Calu3 (cell line): ENCODE measurements at regions of chr5 and their contacts with region 1.

Region 1: DNA sequence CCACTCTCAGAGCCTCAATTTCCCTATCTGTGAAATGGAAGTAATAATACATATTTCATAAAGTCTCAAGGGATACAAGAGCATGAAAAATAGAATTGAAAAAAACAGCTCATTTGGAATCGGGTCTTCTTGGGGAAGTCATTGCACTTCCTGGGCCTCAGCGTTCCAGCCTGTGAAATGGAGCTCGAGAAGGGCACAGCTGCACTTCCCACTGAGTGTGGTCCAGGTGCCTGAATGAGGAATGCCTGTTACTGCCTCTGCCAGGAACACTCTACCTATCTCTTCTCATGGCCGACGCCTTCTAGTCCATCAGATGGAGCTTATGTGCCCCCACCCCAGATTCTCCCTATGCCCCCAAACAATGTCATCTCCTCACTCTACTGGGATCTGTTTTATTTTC is 924 bp upstream of the NEURL1B start:
- DNase-seq: no peak
- H3K4me3 Mint-ChIP-seq: peak overlapping the region; percentile 56
- H3K27ac Mint-ChIP-seq: no peak overlapping the region
- H3K4me1 Mint-ChIP-seq: peaks cover 8% of the 10 kb centered on the region
- H3K27me3 Mint-ChIP-seq: peaks cover 75% of the 10 kb centered on the region
- CTCF ChIP-seq: no peak

Region 2: DNA sequence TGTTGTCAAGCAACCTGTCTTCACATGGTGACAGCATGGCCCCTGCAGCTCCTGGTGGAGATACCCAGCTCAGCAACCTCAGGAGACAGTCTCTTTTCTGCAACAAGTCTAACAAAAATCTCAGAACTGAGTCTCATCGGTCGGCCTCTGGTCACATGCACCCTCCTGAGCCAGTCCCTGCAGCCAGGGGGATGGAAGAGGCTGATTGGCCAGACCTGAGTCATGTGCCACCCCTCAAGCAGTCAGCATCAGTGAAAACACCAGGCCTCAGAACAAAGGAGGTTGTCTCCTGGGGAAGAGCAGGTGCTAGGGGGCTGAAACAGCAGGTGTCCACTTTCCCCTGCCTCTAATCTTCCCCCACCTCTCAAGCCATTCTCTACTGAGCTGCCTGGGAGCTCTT is 800.1 kb before region 1 on chr5:
- CTCF ChIA-PET with region 1: no interaction called
- intact Hi-C with region 1: no loop called
- DNase-seq: no peak
- H3K4me3 Mint-ChIP-seq: no peak overlapping the region
- H3K27ac Mint-ChIP-seq: no peak overlapping the region
- H3K4me1 Mint-ChIP-seq: no peaks in the 10 kb centered on the region
- H3K27me3 Mint-ChIP-seq: no peaks in the 10 kb centered on the region
- CTCF ChIP-seq: no peak

Region 3: GRCh38 chr5:172688349-172689217 is 48.4 kb after region 1 on chr5:
- CTCF ChIA-PET with region 1: no interaction called
- intact Hi-C with region 1: no loop called
- DNase-seq: peak; percentile 71
- H3K4me3 Mint-ChIP-seq: no peak overlapping the region
- H3K27ac Mint-ChIP-seq: peak overlapping the region; percentile 46
- H3K4me1 Mint-ChIP-seq: peaks cover 18% of the 10 kb centered on the region
- H3K27me3 Mint-ChIP-seq: no peaks in the 10 kb centered on the region
- CTCF ChIP-seq: no peak

Region 4: GRCh38 chr5:172714491-172715421 is 74.6 kb after region 1 on chr5:
- CTCF ChIA-PET with region 1: no interaction called
- intact Hi-C with region 1: no loop called
- DNase-seq: peak; percentile 83
- H3K4me3 Mint-ChIP-seq: no peak overlapping the region
- H3K27ac Mint-ChIP-seq: no peak overlapping the region
- H3K4me1 Mint-ChIP-seq: peaks cover 8% of the 10 kb centered on the region
- H3K27me3 Mint-ChIP-seq: peaks cover 35% of the 10 kb centered on the region
- CTCF ChIP-seq: peak; percentile 93

Region 5: GRCh38 chr5:173371400-173371799 is 731.3 kb after region 1 on chr5:
- CTCF ChIA-PET with region 1: interaction called, 10 read pairs
- intact Hi-C with region 1: no loop called
- DNase-seq: no peak
- H3K4me3 Mint-ChIP-seq: no peak overlapping the region
- H3K27ac Mint-ChIP-seq: no peak overlapping the region
- H3K4me1 Mint-ChIP-seq: no peaks in the 10 kb centered on the region
- H3K27me3 Mint-ChIP-seq: peaks cover 31% of the 10 kb centered on the region
- CTCF ChIP-seq: no peak